GM18951 (cell line): ENCODE measurements at regions of chr3 and their contacts with region 1.

Region 1: GRCh38 chr3:88203642-88204055 is 53.9 kb downstream of the C3orf38 start:
- POLR2A ChIP-seq: no peak

Region 2: GRCh38 chr3:89107461-89108290 is 904.0 kb after region 1 on chr3 and contains the start of gene EPHA3:
- in situ Hi-C with region 1: loop called (anchors 25 kb)
- POLR2A ChIP-seq: no peak

Region 3: GRCh38 chr3:90184861-90185260 is 1981.2 kb after region 1 on chr3:
- in situ Hi-C with region 1: loop called (anchors 25 kb)
- POLR2A ChIP-seq: no peak